Gastrocnemius medialis (tissue), 4 donors: ENCODE measurements at regions of chr11 and their contacts with region 1.

Region 1: DNA sequence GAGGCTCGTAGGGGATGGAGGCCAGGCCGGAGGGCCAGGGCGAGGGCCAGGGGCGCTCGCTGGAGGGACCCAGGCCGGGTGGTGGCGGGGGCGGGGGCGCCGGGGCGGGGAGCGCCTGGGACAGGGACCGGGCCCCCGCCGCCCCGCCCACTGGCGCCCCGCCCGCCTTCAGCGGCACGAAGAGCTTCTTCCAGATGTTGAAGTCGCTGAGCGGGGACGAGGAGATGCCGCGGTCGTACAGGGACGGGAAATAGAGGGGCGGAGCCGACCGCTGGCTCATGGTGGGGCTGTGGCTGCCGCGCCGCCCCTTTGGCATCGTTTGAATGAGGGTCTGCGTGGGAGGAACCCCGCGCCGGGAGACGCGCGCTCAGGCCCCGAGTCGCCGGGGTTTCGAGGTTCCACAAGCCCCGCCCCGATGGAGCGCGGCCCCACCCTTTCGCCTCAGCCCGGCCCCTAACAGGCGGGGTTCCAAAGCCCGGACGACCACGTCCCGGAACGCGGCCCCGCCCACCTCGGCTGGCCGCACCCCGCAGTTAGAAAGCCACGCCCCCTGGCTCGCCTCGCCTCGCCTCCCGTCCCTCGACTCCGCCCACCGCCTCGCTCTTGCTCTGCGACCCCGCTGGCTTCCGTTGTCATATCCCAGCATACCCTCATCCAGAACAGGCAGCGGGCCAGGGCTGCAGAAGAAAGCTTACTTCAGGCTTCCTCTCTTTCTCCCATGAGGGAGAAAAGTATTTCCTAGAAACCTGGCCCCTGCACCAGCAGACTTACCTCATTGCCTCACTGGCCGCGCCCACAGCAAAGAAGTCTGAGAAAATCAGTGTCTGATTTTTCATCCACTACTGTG is at the start of gene C11orf91:
- DNase-seq: peak; percentile 89
- ATAC-seq: peak; percentile 55 to 62
- H3K4me3 ChIP-seq: peak within 1 kb of the TSS; percentile 55 to 60 (median 59)
- H3K27ac ChIP-seq: peak within 1 kb of the TSS; percentile 84 to 99 (median 85)
- H3K4me1 ChIP-seq: peaks cover 45 to 63% of the 10 kb centered on the region in 2 donors
- H3K27me3 ChIP-seq: no peaks in the 10 kb centered on the region
- CTCF ChIP-seq: no peak
- POLR2A ChIP-seq: peak; percentile 47 to 56
- total RNA-seq, gene C11orf91: not detected

Region 2: DNA sequence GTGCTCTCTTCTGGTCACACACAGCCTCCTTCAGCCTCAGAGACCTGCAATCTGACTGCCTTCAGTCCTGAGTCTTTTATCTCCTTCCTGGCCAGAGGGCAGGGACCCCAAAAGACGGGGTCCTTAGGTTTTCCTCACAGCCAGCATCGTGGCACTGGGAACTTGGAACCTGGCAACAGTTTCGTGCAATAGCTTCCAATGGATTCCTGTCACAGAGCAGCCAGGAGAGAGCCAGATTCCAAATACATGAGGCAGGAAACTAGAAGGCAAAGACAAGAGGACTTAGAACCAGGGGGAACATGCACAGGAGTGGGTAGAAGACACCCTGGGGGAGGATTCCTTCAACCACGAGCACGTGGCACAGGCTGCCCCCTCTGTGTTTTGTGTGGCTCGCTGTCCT is 48.7 kb before region 1 on chr11:
- in situ Hi-C with region 1: no loop called
- intact Hi-C with region 1: no loop called
- DNase-seq: no peak
- ATAC-seq: peak in 1 of 2 donors; percentile 33
- H3K4me3 ChIP-seq: no peak overlapping the region
- H3K27ac ChIP-seq: peak overlapping the region in 1 of 4 donors; percentile 46
- H3K4me1 ChIP-seq: peaks cover 14 to 23% of the 10 kb centered on the region in 2 donors
- H3K27me3 ChIP-seq: no peaks in the 10 kb centered on the region
- CTCF ChIP-seq: no peak
- POLR2A ChIP-seq: no peak

Region 3: GRCh38 chr11:33722579-33723225 is 22.1 kb after region 1 on chr11:
- in situ Hi-C with region 1: no loop called
- intact Hi-C with region 1: loop called (anchors 2 kb)
- DNase-seq: no peak
- ATAC-seq: peak; percentile 4 to 13
- H3K4me3 ChIP-seq: peak overlapping the region in 2 of 4 donors; percentile 2 to 21
- H3K27ac ChIP-seq: peak overlapping the region; percentile 92 to 99 (median 92)
- H3K4me1 ChIP-seq: peaks cover 94 to 98% of the 10 kb centered on the region in 2 donors
- H3K27me3 ChIP-seq: no peaks in the 10 kb centered on the region
- CTCF ChIP-seq: no peak
- POLR2A ChIP-seq: no peak

Region 4: GRCh38 chr11:33736148-33736809 is 35.6 kb after region 1 on chr11 and contains the start of gene CD59:
- in situ Hi-C with region 1: no loop called
- intact Hi-C with region 1: loop called (anchors 2 kb)
- DNase-seq: peak; percentile 97
- ATAC-seq: peak; percentile 78 to 84
- H3K4me3 ChIP-seq: peak within 1 kb of the TSS; percentile 78 to 96 (median 88)
- H3K27ac ChIP-seq: peak within 1 kb of the TSS; percentile 92 to 99 (median 98)
- H3K4me1 ChIP-seq: peaks cover 39 to 43% of the 10 kb centered on the region in 2 donors
- H3K27me3 ChIP-seq: no peaks in the 10 kb centered on the region
- CTCF ChIP-seq: peak in 1 of 5 experiments; percentile 18
- POLR2A ChIP-seq: peak; percentile 94 to 99
- total RNA-seq, gene CD59: 476 to 717 (median 695) TPM

Region 5: DNA sequence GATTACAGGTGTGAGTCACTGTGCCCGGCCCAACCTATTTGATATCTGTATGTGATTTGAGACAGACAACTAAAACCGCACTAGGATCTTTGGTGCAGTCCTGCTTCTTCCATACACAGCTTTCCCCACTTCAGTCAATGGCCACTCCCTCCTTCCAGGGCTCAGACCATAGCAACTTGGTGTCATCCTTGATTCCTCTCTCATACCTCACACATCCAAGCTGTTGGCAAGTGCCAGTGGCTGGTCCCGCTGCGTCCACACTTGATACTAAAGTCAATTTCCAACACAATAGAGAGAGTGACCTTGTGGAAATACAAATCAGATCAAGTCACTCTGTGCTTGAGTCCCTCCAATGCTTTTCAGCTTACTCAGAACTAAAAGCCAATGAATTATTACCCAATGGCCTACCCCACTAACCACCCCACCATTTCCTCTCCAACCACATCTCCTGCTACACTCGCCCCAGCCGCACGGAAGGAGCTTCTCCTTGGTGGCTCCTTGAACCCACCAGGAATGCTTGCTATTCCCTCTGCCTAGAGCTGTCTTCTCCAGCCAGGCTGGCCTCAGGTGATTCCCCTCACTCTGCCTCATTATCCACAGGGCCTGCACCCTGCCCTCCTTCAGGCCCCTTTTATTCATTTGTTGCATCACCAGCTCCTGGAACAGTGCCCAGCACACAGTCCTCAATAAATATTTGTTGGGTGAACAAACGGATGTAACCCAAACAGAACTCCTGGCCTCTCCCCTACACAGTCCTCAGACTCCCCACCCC is 644.3 kb after region 1 on chr11:
- in situ Hi-C with region 1: no loop called
- intact Hi-C with region 1: loop called (anchors 10 kb)
- DNase-seq: peak in 1 of 2 donors; percentile 33
- ATAC-seq: peak in 1 of 2 donors; percentile 3
- H3K4me3 ChIP-seq: no peak overlapping the region
- H3K27ac ChIP-seq: peak overlapping the region; percentile 84 to 93 (median 87)
- H3K4me1 ChIP-seq: peaks cover 74 to 76% of the 10 kb centered on the region in 2 donors
- H3K27me3 ChIP-seq: no peaks in the 10 kb centered on the region
- CTCF ChIP-seq: no peak
- POLR2A ChIP-seq: no peak

Region 6: DNA sequence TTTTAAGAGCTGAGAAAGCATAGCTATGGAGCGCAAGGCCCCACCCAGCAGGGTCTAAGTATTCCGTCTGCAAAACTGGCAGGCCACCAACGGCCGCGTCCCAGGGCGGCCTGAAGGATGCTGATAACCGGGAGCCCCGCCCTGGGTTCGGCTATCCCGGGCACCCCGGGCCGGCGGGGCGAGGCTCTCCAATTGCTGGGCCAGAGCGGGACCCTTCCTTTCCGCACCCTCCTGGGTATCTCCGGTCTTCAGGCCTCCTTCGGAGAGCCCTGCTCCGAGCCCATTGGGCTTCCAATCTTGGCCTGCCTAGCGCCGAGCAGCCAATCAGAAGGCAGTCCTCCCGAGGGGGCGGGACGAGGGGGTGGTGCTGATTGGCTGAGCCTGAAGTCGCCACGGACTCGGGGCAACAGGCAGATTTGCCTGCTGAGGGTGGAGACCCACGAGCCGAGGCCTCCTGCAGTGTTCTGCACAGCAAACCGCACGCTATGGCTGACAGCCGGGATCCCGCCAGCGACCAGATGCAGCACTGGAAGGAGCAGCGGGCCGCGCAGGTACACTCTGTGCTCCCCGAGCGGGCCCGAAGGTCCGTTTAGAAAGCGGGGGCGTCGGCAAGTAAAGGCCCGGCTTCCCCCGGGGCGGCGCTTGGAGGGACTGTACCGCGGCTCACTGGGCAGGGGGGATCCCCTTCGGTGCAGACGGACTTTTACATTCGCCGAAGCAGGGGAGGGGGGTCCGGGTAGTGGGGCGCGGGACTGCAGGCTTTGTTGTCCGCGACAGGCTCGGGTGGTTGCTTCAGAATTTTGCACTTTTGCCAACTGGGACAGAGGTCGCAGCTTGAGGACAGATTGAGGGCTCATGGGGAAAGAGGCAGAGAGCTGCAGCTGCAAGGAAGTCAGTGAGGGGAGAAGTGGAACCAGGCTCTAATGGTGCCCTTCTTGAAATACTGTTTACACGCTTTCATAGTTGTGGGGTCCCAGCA is 738.2 kb after region 1 on chr11 and contains the start of gene CAT:
- in situ Hi-C with region 1: no loop called
- intact Hi-C with region 1: loop called (anchors 10 kb)
- DNase-seq: peak; percentile 98
- ATAC-seq: peak; percentile 96
- H3K4me3 ChIP-seq: peak within 1 kb of the TSS; percentile 85 to 98 (median 89)
- H3K27ac ChIP-seq: peak within 1 kb of the TSS; percentile 95 to 96 (median 96)
- H3K4me1 ChIP-seq: peaks cover 25 to 50% of the 10 kb centered on the region in 2 donors
- H3K27me3 ChIP-seq: no peaks in the 10 kb centered on the region
- CTCF ChIP-seq: no peak
- POLR2A ChIP-seq: peak; percentile 78 to 79
- total RNA-seq, gene CAT: 107 to 150 (median 128) TPM